ENCODE measurements at regions of chr2 and their contacts with region 1.

Region 1: GRCh38 chr2:65227425-65228262 is at the start of gene ACTR2:
- DNase-seq: peak; percentile 96
- ATAC-seq: peak; percentile 90
- H3K4me3 ChIP-seq: peak within 1 kb of the TSS; percentile 87
- H3K27ac ChIP-seq: peak within 1 kb of the TSS; percentile 87
- H3K4me1 ChIP-seq: peaks cover 36% of the 10 kb centered on the region
- H3K27me3 ChIP-seq: no peaks in the 10 kb centered on the region
- CTCF ChIP-seq: no peak
- total RNA-seq, gene ACTR2: 56.7 and 67.2 TPM in 2 replicates

Region 2: DNA sequence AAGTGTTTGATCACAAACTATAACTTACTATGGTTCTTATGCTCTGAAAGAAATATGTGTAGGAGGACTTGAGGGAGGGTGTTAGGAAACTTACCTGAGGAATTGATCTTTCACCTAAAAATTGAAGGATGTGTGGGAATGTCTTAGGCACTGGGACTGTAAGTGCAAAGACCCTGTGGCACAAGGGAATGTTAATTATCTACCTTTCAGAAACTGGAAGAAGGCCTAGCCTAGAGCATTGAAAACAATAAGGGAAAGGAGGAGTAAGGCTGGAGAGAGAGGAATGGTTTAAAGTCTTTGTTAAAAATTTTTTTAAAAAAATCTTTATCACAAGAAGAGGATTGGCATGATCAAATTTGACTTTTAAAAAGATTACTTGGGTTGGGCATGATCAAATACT is 695.6 kb before region 1 on chr2:
- CTCF ChIA-PET with region 1: no interaction called
- POLR2A ChIA-PET with region 1: interaction called, 19 read pairs
- intact Hi-C with region 1: no loop called
- DNase-seq: no peak
- ATAC-seq: no peak
- H3K4me3 ChIP-seq: no peak overlapping the region
- H3K27ac ChIP-seq: no peak overlapping the region
- H3K4me1 ChIP-seq: peaks cover 14% of the 10 kb centered on the region
- H3K27me3 ChIP-seq: no peaks in the 10 kb centered on the region
- CTCF ChIP-seq: no peak

Region 3: GRCh38 chr2:64848945-64849344 is 378.7 kb before region 1 on chr2:
- CTCF ChIA-PET with region 1: no interaction called
- POLR2A ChIA-PET with region 1: interaction called, 28 read pairs
- intact Hi-C with region 1: no loop called
- DNase-seq: no peak
- ATAC-seq: no peak
- H3K4me3 ChIP-seq: no peak overlapping the region
- H3K27ac ChIP-seq: no peak overlapping the region
- H3K4me1 ChIP-seq: no peaks in the 10 kb centered on the region
- H3K27me3 ChIP-seq: no peaks in the 10 kb centered on the region
- CTCF ChIP-seq: no peak

Region 4: GRCh38 chr2:65070172-65070830 is 157.3 kb before region 1 on chr2:
- CTCF ChIA-PET with region 1: no interaction called
- POLR2A ChIA-PET with region 1: interaction called, 14 read pairs
- intact Hi-C with region 1: no loop called
- DNase-seq: peak; percentile 62
- ATAC-seq: peak; percentile 60
- H3K4me3 ChIP-seq: no peak overlapping the region
- H3K27ac ChIP-seq: peak overlapping the region; percentile 77
- H3K4me1 ChIP-seq: peaks cover 33% of the 10 kb centered on the region
- H3K27me3 ChIP-seq: no peaks in the 10 kb centered on the region
- CTCF ChIP-seq: peak; percentile 33; the same call in 1 of the 2 replicates

Region 5: DNA sequence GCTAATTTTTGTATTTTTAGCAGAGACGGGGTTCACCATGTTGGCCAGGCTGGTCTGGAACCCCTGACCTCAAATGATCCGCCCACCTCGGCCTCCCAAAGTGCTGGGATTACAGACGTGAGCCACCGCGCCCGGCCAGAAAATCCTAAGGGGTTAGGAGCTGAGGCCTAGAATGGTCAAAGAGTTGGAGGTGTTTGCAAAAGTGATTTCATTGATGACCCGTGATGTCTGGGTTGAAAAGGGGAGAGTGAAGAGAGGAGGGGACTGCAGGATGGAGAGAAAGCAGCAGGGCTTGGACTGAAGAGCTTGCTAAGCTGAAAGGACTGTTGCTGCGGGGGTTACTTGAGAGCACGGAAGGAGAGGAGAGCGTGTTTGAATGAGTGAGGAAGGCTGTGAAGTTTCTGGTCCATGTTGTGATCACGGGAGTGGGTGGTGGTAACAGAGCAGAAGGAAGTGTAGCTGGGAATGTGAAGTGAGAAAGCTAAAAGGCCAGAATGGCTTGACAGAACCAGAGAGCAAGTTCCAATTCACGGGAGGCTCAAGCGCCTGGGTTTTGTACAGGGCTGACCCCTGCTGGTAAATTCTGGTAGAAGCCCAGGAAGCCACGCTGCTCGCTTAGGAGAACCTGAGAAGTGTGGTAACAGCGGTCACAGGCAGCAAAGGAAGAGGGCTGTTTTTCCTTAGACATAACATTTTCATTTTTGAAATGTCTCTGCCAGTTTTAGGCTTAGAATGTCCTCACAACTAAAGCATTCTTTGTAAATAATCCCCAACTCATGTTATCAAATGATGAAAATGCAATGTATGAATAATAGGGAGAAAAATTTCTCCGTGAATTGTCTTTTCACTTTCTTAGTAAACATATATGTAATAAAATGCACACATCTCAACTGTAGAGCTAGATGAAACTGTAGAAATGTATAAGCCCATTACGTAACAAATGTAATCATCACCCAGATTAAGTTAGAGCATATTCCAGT is 40.5 kb before region 1 on chr2:
- CTCF ChIA-PET with region 1: no interaction called
- POLR2A ChIA-PET with region 1: interaction called, 5 read pairs
- intact Hi-C with region 1: loop called (anchors 2 kb)
- DNase-seq: peak; percentile 90
- ATAC-seq: peak; percentile 81
- H3K4me3 ChIP-seq: peak overlapping the region; percentile 29; the same call in 1 of the 2 replicates
- H3K27ac ChIP-seq: peak overlapping the region; percentile 49
- H3K4me1 ChIP-seq: peaks cover 18% of the 10 kb centered on the region
- H3K27me3 ChIP-seq: no peaks in the 10 kb centered on the region
- CTCF ChIP-seq: peak; percentile 91

Region 6: GRCh38 chr2:65350684-65351083 is 123.0 kb after region 1 on chr2:
- CTCF ChIA-PET with region 1: no interaction called
- POLR2A ChIA-PET with region 1: no interaction called
- intact Hi-C with region 1: no loop called
- DNase-seq: no peak
- ATAC-seq: no peak; the same call in none of the 2 replicates
- H3K4me3 ChIP-seq: no peak overlapping the region
- H3K27ac ChIP-seq: no peak overlapping the region
- H3K4me1 ChIP-seq: peaks cover 26% of the 10 kb centered on the region
- H3K27me3 ChIP-seq: no peaks in the 10 kb centered on the region
- CTCF ChIP-seq: peak; percentile 44; the same call in 1 of the 2 replicates

Region 7: GRCh38 chr2:65477590-65477989 is 249.9 kb after region 1 on chr2:
- CTCF ChIA-PET with region 1: no interaction called
- POLR2A ChIA-PET with region 1: interaction called, 10 read pairs
- intact Hi-C with region 1: no loop called
- DNase-seq: no peak
- ATAC-seq: no peak
- H3K4me3 ChIP-seq: no peak overlapping the region
- H3K27ac ChIP-seq: no peak overlapping the region
- H3K4me1 ChIP-seq: no peaks in the 10 kb centered on the region
- H3K27me3 ChIP-seq: no peaks in the 10 kb centered on the region
- CTCF ChIP-seq: no peak

Region 8: GRCh38 chr2:66789741-66790140 is 1562.1 kb after region 1 on chr2:
- CTCF ChIA-PET with region 1: no interaction called
- POLR2A ChIA-PET with region 1: interaction called, 11 read pairs
- intact Hi-C with region 1: no loop called
- DNase-seq: peak; percentile 96
- ATAC-seq: peak; percentile 27; the same call in 1 of the 2 replicates
- H3K4me3 ChIP-seq: no peak overlapping the region; the same call in 1 of the 2 replicates
- H3K27ac ChIP-seq: peak overlapping the region; percentile 82
- H3K4me1 ChIP-seq: peaks cover 24% of the 10 kb centered on the region
- H3K27me3 ChIP-seq: no peaks in the 10 kb centered on the region
- CTCF ChIP-seq: no peak